BJ (cell line): ENCODE measurements at regions of chr6 and their contacts with region 1.

Region 1: GRCh38 chr6:116268589-116269293 is 11.0 kb downstream of the TSPYL1 start:
- DNase-seq: peak; percentile 29
- H3K4me3 ChIP-seq: no peak overlapping the region
- H3K27me3 ChIP-seq: no peaks in the 10 kb centered on the region
- CTCF ChIP-seq: peak; percentile 85

Region 2: GRCh38 chr6:116253505-116254296 is 15.0 kb before region 1 on chr6 and contains the start of gene TSPYL4:
- CTCF ChIA-PET with region 1: interaction called, 43 read pairs
- POLR2A ChIA-PET with region 1: no interaction called
- DNase-seq: peak; percentile 72
- H3K4me3 ChIP-seq: peak within 1 kb of the TSS; percentile 99
- H3K27me3 ChIP-seq: no peaks in the 10 kb centered on the region
- CTCF ChIP-seq: no peak
- polyA plus RNA-seq, gene TSPYL4: 33.7 and 34.2 TPM in 2 replicates

Region 3: DNA sequence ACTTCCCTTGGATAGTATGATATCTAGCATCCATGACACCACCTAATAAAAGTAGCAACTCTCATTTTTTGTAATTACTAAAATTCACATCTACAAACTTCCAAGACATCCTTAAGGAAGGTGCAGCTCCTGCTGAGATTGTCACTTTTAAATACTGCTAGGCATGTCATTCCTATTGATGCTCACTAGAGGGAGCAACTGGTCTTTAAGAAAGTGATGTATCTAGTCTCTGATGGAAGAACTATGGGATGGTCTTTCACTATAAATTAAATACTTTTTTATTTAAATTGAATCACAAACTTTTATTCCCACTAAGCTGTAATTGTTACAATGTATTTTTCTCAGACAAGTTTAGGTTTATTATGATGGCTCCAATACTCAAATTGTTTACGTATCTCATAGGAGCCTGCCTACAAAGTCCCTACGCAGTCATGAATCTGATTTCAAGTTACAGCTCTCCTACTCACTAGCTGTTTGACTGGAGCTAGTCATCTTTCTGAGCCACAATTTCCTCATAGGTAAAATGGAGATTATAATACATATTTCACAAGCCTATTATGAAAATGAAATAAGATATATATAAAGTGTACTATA is 19.0 kb after region 1 on chr6:
- CTCF ChIA-PET with region 1: interaction called, 27 read pairs
- POLR2A ChIA-PET with region 1: no interaction called
- DNase-seq: no peak
- H3K4me3 ChIP-seq: no peak overlapping the region
- H3K27me3 ChIP-seq: no peaks in the 10 kb centered on the region
- CTCF ChIP-seq: peak; percentile 80

Region 4: DNA sequence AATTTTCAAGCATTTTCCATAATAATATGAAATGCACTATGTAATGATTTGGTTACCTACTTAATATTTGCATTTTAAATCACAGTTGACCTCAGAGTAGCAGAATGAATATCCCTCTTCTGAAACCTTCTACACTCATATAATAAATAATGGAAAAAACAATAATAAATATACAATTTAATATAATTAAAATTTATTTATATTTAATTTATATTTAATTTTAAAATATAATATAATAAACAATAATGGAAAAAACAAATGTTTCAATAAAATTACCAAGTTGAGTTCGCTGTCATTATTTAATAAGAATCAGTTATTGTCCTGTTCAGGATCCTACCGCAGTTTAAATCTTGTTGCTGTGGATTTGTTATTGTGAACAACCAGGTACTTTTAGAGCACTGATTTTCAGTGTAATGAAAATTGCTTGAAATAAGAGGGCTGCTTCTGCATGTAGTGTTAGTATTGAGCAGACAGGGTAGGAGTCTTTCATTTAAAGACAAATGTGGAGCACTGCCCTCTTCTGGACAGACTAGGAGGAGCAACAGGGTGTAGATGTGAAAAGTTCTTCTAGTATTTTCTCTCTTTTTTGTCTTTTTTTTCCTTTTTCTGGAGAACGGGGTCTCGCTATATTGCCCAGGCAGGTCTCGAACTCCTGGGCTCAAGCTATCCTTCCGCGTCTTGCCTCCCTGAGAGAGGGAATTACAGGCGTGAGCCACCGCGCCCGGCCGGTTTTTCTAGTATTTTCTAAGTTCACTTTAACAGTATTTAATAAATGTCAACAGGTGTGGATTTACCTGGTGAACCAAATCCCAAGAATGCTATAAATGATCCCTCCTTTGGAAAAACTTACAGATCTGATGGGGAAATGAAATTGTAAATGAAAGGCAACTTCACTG is 263.2 kb after region 1 on chr6:
- CTCF ChIA-PET with region 1: interaction called, 53 read pairs
- POLR2A ChIA-PET with region 1: interaction called, 4 read pairs
- DNase-seq: no peak
- H3K4me3 ChIP-seq: no peak overlapping the region
- H3K27me3 ChIP-seq: no peaks in the 10 kb centered on the region
- CTCF ChIP-seq: peak; percentile 76

Region 5: DNA sequence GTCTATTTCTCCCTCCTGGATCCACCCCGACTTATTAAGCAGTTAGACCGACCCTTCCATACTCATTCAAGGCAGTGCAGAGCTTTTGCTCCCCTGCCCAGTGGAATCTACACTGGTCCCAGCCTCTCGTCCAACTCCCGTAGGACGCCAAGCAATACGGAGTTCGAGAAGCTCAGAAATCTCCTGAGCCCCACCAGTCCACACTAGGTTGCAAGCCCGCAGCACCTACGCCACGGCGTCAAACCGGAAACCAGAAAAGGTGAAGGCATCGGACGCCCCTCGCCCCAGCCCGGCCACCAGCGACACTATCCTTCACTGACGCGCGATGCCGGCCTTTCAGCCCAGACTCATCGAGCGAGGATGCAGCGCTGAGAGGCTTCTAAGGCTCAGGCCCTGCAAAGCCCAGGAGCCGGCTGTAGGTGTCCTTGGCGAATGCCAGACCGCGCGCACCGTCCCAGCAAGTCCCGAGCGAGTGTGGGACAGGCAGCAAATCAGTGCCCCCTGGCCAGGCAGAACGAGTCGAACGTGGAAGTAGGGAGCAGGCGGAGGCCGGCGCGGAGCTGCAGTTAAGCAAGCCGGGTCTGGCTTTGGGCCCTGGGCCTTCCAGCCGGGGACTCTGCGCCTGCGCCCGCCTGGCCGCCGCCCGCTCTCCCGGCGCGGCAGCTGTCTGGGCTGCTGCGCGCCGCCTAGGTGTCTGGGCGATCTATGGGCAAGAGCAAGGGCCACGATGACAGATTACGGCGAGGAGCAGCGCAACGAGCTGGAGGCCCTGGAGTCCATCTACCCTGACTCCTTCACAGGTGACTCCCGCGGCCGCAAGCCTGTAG is 302.3 kb after region 1 on chr6 and contains the start of gene RWDD1:
- CTCF ChIA-PET with region 1: interaction called, 18 read pairs
- POLR2A ChIA-PET with region 1: no interaction called
- DNase-seq: peak; percentile 96
- H3K4me3 ChIP-seq: peak within 1 kb of the TSS; percentile 71
- H3K27me3 ChIP-seq: no peaks in the 10 kb centered on the region
- CTCF ChIP-seq: 0 out of 2 replicates have a peak, but pooled peaks have one; percentile 4
- polyA plus RNA-seq, gene RWDD1: 22.5 and 44.3 TPM in 2 replicates